Gastrocnemius medialis (tissue), 4 donors: ENCODE measurements at regions of chr15 and their contacts with region 1.

Region 1: GRCh38 chr15:40593588-40594428 is at the start of gene KNL1:
- DNase-seq: peak; percentile 83 to 91
- ATAC-seq: peak; percentile 97 to 98
- H3K4me3 ChIP-seq: peak within 1 kb of the TSS; percentile 72 to 88 (median 82)
- H3K27ac ChIP-seq: peak within 1 kb of the TSS; percentile 88 to 97 (median 93)
- H3K4me1 ChIP-seq: peaks cover 9% of the 10 kb centered on the region in 2 donors
- H3K27me3 ChIP-seq: no peaks in the 10 kb centered on the region
- CTCF ChIP-seq: no peak
- POLR2A ChIP-seq: no peak
- total RNA-seq, gene KNL1: 0.10 to 0.33 (median 0.33) TPM in 3 of 4 donors, not detected in the other

Region 2: DNA sequence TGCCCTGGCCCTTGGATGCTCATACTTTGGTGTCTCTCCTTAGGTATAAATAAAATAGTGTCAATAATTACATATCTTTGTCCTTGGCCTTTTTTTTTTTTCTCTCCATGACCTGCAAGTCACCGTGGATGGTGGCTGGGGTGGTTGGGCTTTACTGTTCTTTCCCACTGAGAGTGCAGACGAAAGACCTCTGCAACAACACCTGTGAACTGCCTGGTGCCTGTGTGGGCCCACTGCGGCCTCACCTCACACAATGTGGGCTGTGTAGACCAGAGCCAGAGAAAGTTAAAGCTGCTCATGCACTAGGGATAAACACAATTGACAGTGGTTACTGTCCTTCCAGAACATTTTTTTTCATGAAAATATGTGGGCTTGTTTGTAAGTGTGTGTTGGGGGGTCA is 68.0 kb before region 1 on chr15:
- in situ Hi-C with region 1: loop called in 1 of 4 experiments (anchors 10 kb)
- intact Hi-C with region 1: loop called (anchors 5 kb)
- DNase-seq: no peak
- ATAC-seq: no peak
- H3K4me3 ChIP-seq: no peak overlapping the region
- H3K27ac ChIP-seq: no peak overlapping the region
- H3K4me1 ChIP-seq: no peaks in the 10 kb centered on the region
- H3K27me3 ChIP-seq: no peaks in the 10 kb centered on the region
- CTCF ChIP-seq: no peak
- POLR2A ChIP-seq: no peak

Region 3: GRCh38 chr15:40536501-40536900 is 57.3 kb before region 1 on chr15:
- in situ Hi-C with region 1: loop called in 1 of 4 experiments (anchors 10 kb)
- intact Hi-C with region 1: no loop called
- DNase-seq: no peak
- ATAC-seq: no peak
- H3K4me3 ChIP-seq: no peak overlapping the region
- H3K27ac ChIP-seq: no peak overlapping the region
- H3K4me1 ChIP-seq: no peaks in the 10 kb centered on the region
- H3K27me3 ChIP-seq: no peaks in the 10 kb centered on the region
- CTCF ChIP-seq: no peak
- POLR2A ChIP-seq: no peak

Region 4: DNA sequence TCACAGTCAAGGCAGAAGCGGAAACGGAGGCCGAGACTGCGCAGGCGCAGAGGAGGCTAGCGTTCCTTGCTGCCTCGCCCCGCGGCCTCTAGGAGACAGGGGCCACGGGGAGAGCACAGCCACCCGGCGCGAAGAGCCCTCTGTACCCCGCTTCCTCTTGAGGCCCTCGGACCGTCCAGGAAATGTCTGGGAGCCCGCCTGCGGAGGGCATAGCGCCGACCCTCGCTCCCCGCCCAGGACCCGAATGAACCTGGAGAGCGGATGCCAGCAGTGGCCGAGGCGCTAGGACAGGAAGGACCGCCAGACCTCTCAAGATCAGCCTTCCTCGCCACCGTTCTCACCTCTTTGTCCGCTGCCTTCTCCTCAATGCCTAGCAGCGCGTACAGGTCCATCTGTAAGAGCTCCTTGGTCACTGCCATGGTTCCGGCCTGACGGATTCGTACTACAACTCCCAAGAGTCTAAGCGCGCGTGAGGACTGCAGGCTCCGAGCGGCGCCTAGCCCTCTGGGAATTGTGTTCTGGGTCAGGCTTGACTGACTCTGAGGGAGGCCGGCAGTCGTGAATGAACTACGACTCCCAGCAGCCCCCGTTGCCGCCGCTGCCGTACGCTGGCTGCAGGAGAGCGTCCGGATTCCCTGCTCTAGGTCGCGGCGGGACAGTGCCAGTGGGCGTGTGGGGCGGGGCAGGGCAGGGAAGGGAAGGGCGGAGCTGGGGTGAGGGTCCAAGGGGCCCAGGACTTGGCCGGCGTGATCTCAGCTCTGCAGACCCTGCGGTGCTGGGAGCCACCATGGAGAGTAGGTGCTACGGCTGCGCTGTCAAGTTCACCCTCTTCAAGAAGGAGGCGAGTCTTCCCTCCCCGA is 213.4 kb after region 1 on chr15 and contains the starts of genes DNAJC17 and ZFYVE19:
- in situ Hi-C with region 1: no loop called
- intact Hi-C with region 1: loop called (anchors 10 kb)
- DNase-seq: peak; percentile 97
- ATAC-seq: peak; percentile 98 to 99
- H3K4me3 ChIP-seq: peak within 1 kb of the TSS; percentile 87 to 100 (median 94)
- H3K27ac ChIP-seq: peak within 1 kb of the TSS; percentile 96 to 100 (median 97)
- H3K4me1 ChIP-seq: peaks cover 19 to 34% of the 10 kb centered on the region in 2 donors
- H3K27me3 ChIP-seq: no peaks in the 10 kb centered on the region
- CTCF ChIP-seq: peak in 1 of 5 experiments; percentile 30
- POLR2A ChIP-seq: peak; percentile 62 to 66
- total RNA-seq, gene DNAJC17: 5.3 to 25.0 (median 11.4) TPM
- total RNA-seq, gene ZFYVE19: 11.4 to 18.9 (median 14.7) TPM

Region 5: GRCh38 chr15:40999190-40999589 is 405.4 kb after region 1 on chr15:
- in situ Hi-C with region 1: no loop called
- intact Hi-C with region 1: no loop called
- DNase-seq: no peak
- ATAC-seq: no peak
- H3K4me3 ChIP-seq: no peak overlapping the region
- H3K27ac ChIP-seq: no peak overlapping the region
- H3K4me1 ChIP-seq: peaks cover 10 to 15% of the 10 kb centered on the region in 2 donors
- H3K27me3 ChIP-seq: no peaks in the 10 kb centered on the region
- CTCF ChIP-seq: no peak
- POLR2A ChIP-seq: no peak